ENCODE measurements at regions of chr9 and their contacts with region 1.

Region 1: DNA sequence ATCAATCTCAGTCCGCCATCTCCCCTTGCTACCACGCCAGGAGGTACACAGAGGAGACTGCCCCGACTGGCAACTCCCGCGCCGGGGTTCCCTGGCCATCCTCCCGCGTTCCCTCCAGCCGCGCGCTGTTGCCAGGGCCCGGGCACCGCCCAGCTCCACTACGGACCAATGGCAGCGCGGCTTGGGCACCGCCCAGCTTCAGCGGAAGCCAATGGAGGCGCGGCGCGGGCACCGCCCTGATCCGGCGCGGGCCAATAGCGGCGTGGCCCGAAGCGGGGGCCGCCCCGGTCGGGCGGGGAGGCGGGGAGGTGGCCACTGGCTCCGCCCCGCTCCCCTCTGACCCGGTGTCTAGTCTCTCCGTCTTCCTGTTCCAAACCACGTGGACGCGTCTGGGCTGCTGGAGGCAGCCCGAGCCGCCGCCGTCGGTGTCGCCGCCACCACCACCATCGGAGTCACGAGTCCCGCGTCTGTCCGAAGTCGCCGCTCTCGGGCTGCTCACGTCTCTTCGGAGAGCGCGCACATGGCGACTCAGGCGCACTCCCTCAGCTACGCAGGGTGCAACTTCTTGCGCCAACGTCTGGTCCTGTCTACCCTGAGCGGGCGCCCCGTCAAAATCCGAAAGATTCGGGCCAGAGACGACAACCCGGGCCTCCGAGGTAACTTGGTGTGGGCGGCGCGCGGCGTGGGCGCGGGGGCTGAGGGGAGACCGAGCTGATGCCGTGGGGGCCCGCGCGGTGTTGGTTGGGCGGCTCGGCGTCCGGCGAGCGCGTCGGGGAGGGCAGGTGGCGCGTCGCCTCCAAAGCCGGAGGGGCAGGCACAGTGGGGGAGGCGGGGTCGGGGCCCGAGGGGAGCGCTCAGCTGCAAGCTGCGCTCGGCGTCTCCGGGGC is at the start of gene RCL1:
- DNase-seq: peak; percentile 93 to 98 (median 97)
- ATAC-seq: peak; percentile 96
- H3K4me3 ChIP-seq: peak within 1 kb of the TSS; percentile 99
- H3K4me3 Mint-ChIP-seq: peak within 1 kb of the TSS; percentile 83 to 97 (median 94)
- H3K27ac ChIP-seq: peak within 1 kb of the TSS; percentile 80
- H3K27ac Mint-ChIP-seq: peak within 1 kb of the TSS; percentile 71 to 97 (median 94)
- H3K4me1 ChIP-seq: peaks cover 4 to 18% of the 10 kb centered on the region in 2 donors
- H3K4me1 Mint-ChIP-seq: peaks cover 21 to 56% (median 45%) of the 10 kb centered on the region in 7 donors
- H3K27me3 ChIP-seq: no peaks in the 10 kb centered on the region
- H3K27me3 Mint-ChIP-seq: peaks cover 0 to 11% (median 0%) of the 10 kb centered on the region in 5 donors
- total RNA-seq, gene RCL1: 21.5 to 39.4 (median 23.4) TPM

Region 2: DNA sequence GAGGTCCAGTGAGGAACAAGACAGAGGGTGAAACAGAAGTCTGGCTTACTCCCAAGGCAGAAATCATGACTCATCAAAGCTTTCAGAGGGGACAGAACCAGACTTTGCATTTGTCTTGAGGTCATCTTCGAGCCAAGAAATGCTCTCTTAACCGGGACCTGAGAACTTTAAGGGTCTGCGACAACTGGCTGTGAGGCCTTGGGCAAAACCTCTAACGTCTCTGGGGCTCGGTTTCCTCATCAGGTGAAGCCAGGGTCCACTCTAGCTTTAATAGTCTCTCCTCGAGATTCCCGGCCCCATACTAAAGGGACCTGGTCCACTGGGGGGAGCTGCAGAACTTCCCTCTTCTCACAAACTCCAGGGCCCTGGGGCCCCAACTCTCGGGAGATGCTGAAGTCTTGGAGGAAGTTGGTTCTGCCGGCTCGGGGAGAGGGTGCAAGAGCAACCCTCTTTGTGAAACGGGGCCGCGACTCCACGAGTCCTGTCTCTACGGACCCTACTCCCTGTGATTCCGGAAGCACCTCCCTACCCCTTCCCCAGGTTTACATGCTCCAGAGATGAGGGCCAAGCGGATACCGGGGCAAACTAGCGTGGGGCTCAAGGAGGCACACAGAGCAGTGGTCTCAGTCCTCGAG is 495.5 kb before region 1 on chr9:
- CTCF ChIA-PET with region 1: no interaction called
- POLR2A ChIA-PET with region 1: no interaction called
- intact Hi-C with region 1: loop called in 1 of 2 experiments (anchors 1 kb)
- DNase-seq: peak; percentile 12 to 47 (median 29)
- ATAC-seq: peak; percentile 55
- H3K4me3 ChIP-seq: peak overlapping the region; percentile 74
- H3K4me3 Mint-ChIP-seq: peak overlapping the region; percentile 93 to 98 (median 96)
- H3K27ac ChIP-seq: peak overlapping the region; percentile 68
- H3K27ac Mint-ChIP-seq: peak overlapping the region; percentile 80 to 97 (median 88)
- H3K4me1 ChIP-seq: peaks cover 0 to 4% of the 10 kb centered on the region in 2 donors
- H3K4me1 Mint-ChIP-seq: peaks cover 15 to 34% (median 21%) of the 10 kb centered on the region in 7 donors
- H3K27me3 ChIP-seq: no peaks in the 10 kb centered on the region
- H3K27me3 Mint-ChIP-seq: peaks cover 0 to 67% (median 28%) of the 10 kb centered on the region in 5 donors

Region 3: DNA sequence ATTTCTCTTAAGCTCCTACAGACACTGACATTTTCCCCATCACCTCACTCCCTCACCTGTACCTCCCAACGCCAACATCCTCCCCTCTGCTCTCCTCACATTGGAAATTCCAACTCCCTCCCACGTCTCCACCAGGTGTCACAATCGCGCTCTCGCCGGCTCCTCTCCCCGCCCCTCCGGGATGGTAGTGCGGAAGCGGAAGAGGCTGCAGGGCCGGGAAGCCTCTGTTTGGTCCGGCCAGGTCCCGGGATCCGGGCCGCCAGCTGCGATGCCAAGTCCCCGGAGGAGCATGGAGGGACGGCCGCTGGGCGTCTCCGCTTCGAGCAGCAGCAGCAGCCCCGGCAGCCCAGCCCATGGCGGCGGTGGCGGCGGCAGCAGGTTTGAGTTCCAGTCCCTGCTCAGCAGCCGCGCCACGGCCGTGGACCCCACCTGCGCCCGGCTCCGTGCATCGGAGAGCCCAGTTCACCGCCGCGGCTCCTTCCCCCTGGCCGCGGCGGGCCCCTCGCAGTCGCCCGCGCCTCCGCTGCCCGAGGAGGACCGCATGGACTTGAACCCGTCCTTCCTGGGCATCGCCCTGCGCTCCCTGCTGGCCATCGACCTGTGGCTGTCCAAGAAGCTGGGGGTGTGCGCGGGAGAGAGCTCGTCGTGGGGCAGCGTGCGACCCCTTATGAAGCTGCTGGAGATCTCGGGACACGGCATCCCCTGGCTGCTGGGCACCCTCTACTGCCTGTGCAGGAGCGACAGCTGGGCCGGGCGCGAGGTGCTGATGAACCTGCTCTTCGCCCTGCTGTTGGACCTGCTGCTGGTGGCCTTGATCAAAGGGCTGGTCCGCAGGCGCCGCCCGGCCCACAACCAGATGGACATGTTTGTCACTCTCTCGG is 130.5 kb before region 1 on chr9 and contains the start of gene PLPP6:
- CTCF ChIA-PET with region 1: interaction called, 3 read pairs
- POLR2A ChIA-PET with region 1: interaction called, 10 read pairs
- intact Hi-C with region 1: loop called in 1 of 2 experiments (anchors 1 kb)
- DNase-seq: peak; percentile 55 to 81 (median 76)
- ATAC-seq: peak; percentile 86
- H3K4me3 ChIP-seq: peak within 1 kb of the TSS; percentile 63
- H3K4me3 Mint-ChIP-seq: peak within 1 kb of the TSS; percentile 89 to 98 (median 96)
- H3K27ac ChIP-seq: peak within 1 kb of the TSS; percentile 78
- H3K27ac Mint-ChIP-seq: peak within 1 kb of the TSS; percentile 85 to 98 (median 95)
- H3K4me1 ChIP-seq: peaks cover 21 to 50% of the 10 kb centered on the region in 2 donors
- H3K4me1 Mint-ChIP-seq: peaks cover 41 to 80% (median 64%) of the 10 kb centered on the region in 7 donors
- H3K27me3 ChIP-seq: no peaks in the 10 kb centered on the region
- H3K27me3 Mint-ChIP-seq: peaks cover 0 to 12% (median 0%) of the 10 kb centered on the region in 5 donors
- total RNA-seq, gene PLPP6: 7.4 to 24.1 (median 10.2) TPM

Region 4: DNA sequence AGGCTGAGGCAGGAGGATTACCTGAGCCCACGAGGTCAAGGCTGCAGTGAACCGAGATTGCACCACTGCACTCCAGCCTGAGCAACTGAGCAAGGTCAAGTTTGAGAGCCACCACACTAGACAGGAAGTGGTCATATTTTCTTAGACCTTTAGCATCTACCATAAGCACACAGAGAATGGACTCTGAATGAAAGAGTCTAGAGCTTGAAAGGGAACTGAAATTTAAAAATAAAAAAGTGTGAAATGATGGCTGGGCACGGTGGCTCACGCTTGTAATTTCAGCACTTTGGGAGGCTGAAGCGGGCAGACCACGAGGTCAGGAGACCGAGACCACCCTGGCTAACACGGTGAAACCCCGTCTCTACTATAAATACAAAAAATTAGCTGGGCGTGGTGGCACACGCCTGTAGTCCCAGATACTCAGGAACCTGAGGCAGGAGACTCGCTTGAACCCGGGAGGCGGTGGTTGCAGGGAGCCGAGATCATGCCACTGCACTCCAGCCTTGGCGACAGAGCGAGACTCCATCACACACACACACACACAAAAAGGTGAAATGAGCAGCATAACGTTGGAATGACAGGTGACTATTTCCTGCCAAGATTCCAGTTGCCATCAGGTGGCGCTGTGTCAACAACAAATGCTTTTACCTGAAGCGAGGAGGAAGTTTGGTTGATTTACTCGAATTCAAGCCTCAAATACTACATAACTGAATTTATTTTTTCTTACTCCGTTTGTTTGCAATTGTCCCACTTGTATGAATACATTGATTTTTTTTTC is 30.5 kb before region 1 on chr9:
- CTCF ChIA-PET with region 1: interaction called, 24 read pairs
- POLR2A ChIA-PET with region 1: interaction called, 3 read pairs
- intact Hi-C with region 1: loop called (anchors 1 kb)
- DNase-seq: peak; percentile 56 to 83 (median 76)
- ATAC-seq: peak; percentile 79
- H3K4me3 ChIP-seq: no peak overlapping the region
- H3K4me3 Mint-ChIP-seq: peak overlapping the region; percentile 39 to 79 (median 64)
- H3K27ac ChIP-seq: no peak overlapping the region
- H3K27ac Mint-ChIP-seq: peak overlapping the region in 5 of 9 donors; percentile 29 to 83 (median 51)
- H3K4me1 ChIP-seq: peaks cover 0 to 3% of the 10 kb centered on the region in 2 donors
- H3K4me1 Mint-ChIP-seq: peaks cover 0 to 20% (median 10%) of the 10 kb centered on the region in 7 donors
- H3K27me3 ChIP-seq: no peaks in the 10 kb centered on the region
- H3K27me3 Mint-ChIP-seq: peaks cover 0 to 11% (median 7%) of the 10 kb centered on the region in 5 donors

Region 5: GRCh38 chr9:4923580-4924544 is 131.0 kb after region 1 on chr9:
- CTCF ChIA-PET with region 1: interaction called, 8 read pairs
- POLR2A ChIA-PET with region 1: no interaction called
- intact Hi-C with region 1: loop called in 1 of 2 experiments (anchors 1 kb)
- DNase-seq: peak in 5 of 9 donors; percentile 27 to 41 (median 31)
- ATAC-seq: peak; percentile 71
- H3K4me3 ChIP-seq: no peak overlapping the region
- H3K4me3 Mint-ChIP-seq: no peak overlapping the region
- H3K27ac ChIP-seq: no peak overlapping the region
- H3K27ac Mint-ChIP-seq: peak overlapping the region in 3 of 9 donors; percentile 12 to 76 (median 62)
- H3K4me1 ChIP-seq: no peaks in the 10 kb centered on the region
- H3K4me1 Mint-ChIP-seq: peaks cover 0 to 32% (median 4%) of the 10 kb centered on the region in 7 donors
- H3K27me3 ChIP-seq: no peaks in the 10 kb centered on the region
- H3K27me3 Mint-ChIP-seq: no peaks in the 10 kb centered on the region

Region 6: DNA sequence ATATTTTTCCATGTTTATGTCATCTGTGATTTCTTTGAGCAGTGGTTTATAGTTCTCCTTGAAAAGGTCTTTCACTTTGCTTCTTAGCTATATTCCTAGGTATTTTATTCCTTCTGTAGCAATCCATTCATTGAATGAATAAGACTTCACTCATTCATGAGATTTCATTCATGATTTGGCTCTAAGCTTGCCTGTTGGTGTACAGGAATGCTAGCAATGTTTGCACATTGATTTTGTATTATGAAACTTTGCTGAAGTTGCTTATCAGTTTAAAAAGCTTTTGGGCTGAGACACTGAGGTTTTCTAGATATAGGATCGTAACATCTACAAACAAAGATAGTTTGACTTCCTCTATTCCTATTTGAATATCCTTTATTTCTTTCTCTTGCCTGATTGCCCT is 495.8 kb after region 1 on chr9:
- CTCF ChIA-PET with region 1: no interaction called
- POLR2A ChIA-PET with region 1: no interaction called
- intact Hi-C with region 1: no loop called
- DNase-seq: no peak
- ATAC-seq: no peak
- H3K4me3 ChIP-seq: no peak overlapping the region
- H3K4me3 Mint-ChIP-seq: no peak overlapping the region
- H3K27ac ChIP-seq: no peak overlapping the region
- H3K27ac Mint-ChIP-seq: peak overlapping the region in 1 of 9 donors; percentile 27
- H3K4me1 ChIP-seq: no peaks in the 10 kb centered on the region
- H3K4me1 Mint-ChIP-seq: peaks cover 0 to 7% (median 0%) of the 10 kb centered on the region in 7 donors
- H3K27me3 ChIP-seq: no peaks in the 10 kb centered on the region
- H3K27me3 Mint-ChIP-seq: peaks cover 0 to 33% (median 0%) of the 10 kb centered on the region in 5 donors

Region 7: GRCh38 chr9:5336688-5337087 is 543.9 kb after region 1 on chr9:
- CTCF ChIA-PET with region 1: no interaction called
- POLR2A ChIA-PET with region 1: no interaction called
- intact Hi-C with region 1: loop called in 1 of 2 experiments (anchors 10 kb)
- DNase-seq: peak in 7 of 9 donors; percentile 47 to 70 (median 60)
- ATAC-seq: peak; percentile 62
- H3K4me3 ChIP-seq: peak overlapping the region; percentile 27
- H3K4me3 Mint-ChIP-seq: peak overlapping the region; percentile 64 to 87 (median 80)
- H3K27ac ChIP-seq: peak overlapping the region; percentile 64
- H3K27ac Mint-ChIP-seq: peak overlapping the region; percentile 79 to 95 (median 91)
- H3K4me1 ChIP-seq: peaks cover 24 to 28% of the 10 kb centered on the region in 2 donors
- H3K4me1 Mint-ChIP-seq: peaks cover 20 to 64% (median 50%) of the 10 kb centered on the region in 7 donors
- H3K27me3 ChIP-seq: no peaks in the 10 kb centered on the region
- H3K27me3 Mint-ChIP-seq: no peaks in the 10 kb centered on the region

Region 8: GRCh38 chr9:6015278-6016157 is 1222.7 kb after region 1 on chr9 and contains the start of gene RANBP6:
- CTCF ChIA-PET with region 1: no interaction called
- POLR2A ChIA-PET with region 1: no interaction called
- intact Hi-C with region 1: loop called in 1 of 2 experiments (anchors 2 kb)
- DNase-seq: peak; percentile 81 to 92 (median 91)
- ATAC-seq: peak; percentile 100
- H3K4me3 ChIP-seq: peak within 1 kb of the TSS; percentile 65
- H3K4me3 Mint-ChIP-seq: peak within 1 kb of the TSS; percentile 91 to 99 (median 96)
- H3K27ac ChIP-seq: peak within 1 kb of the TSS; percentile 75
- H3K27ac Mint-ChIP-seq: peak within 1 kb of the TSS; percentile 91 to 100 (median 99)
- H3K4me1 ChIP-seq: peaks cover 8 to 11% of the 10 kb centered on the region in 2 donors
- H3K4me1 Mint-ChIP-seq: peaks cover 13 to 49% (median 38%) of the 10 kb centered on the region in 7 donors
- H3K27me3 ChIP-seq: no peaks in the 10 kb centered on the region
- H3K27me3 Mint-ChIP-seq: no peaks in the 10 kb centered on the region
- total RNA-seq, gene RANBP6: 21.9 to 34.3 (median 30.3) TPM

Measured in naive thymus-derived CD4-positive, alpha-beta T cell (primary cell).